Prostate gland (tissue), 2 donors: ENCODE measurements at regions of chr17 and their contacts with region 1.

Region 1: DNA sequence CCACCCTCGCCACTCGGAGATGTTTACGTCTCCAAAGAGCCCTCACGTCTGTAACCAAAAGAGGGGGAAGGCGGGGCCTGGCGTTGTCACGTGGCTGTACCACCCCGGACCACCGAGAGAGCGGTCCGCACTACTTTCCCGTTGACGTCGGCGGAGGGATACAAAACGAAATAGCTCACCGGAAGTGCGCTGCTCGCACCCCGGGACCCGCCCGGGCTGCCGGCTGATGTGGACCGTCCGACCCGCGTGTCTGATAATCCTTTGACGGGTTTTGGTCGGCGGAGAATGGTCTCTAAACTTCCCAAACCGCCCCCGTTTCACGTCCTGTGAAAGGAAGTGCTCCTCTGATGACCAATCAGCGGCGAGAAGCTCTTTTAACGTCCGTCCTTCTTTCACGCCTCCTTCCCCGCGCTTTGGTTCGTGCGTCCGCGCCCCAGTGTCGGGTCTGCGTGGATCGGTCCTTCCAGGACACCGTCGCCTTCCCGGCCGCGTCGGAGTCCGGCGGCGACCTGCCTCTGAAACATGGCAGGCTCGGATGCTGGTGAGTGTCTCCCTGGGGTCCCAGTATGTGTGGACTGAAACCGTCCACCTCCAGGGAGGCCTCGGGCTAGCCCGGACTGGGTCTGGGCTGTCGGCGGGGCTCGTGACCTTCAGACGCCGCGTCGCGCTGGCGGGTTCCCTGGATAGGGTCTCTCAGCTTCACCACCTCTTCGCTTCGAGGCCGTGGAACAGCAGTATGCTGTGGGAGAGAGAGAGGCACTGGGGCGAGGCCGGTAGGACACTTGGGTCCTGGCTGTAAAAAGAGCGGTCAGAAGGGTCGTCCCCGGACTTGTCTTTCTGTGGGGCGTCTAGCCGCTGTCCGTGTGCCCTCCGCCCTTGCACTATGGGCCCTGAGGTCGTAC is at the start of gene CEP95:
- DNase-seq: peak; percentile 91
- H3K4me3 ChIP-seq: peak within 1 kb of the TSS; percentile 94 to 98
- H3K27ac ChIP-seq: peak within 1 kb of the TSS; percentile 99
- H3K4me1 ChIP-seq: peaks cover 7% of the 10 kb centered on the region
- H3K27me3 ChIP-seq: no peaks in the 10 kb centered on the region
- CTCF ChIP-seq: peak in 1 of 4 experiments; percentile 18
- POLR2A ChIP-seq: peak; percentile 81
- total RNA-seq, gene CEP95: 26.8 to 50.6 TPM

Region 2: GRCh38 chr17:64320613-64321553 is 185.9 kb before region 1 on chr17:
- intact Hi-C with region 1: loop called (anchors 10 kb)
- DNase-seq: peak; percentile 41
- H3K4me3 ChIP-seq: no peak overlapping the region
- H3K27ac ChIP-seq: no peak overlapping the region
- H3K4me1 ChIP-seq: no peaks in the 10 kb centered on the region
- H3K27me3 ChIP-seq: no peaks in the 10 kb centered on the region
- CTCF ChIP-seq: peak; percentile 59 to 71 (median 68)
- POLR2A ChIP-seq: no peak

Region 3: DNA sequence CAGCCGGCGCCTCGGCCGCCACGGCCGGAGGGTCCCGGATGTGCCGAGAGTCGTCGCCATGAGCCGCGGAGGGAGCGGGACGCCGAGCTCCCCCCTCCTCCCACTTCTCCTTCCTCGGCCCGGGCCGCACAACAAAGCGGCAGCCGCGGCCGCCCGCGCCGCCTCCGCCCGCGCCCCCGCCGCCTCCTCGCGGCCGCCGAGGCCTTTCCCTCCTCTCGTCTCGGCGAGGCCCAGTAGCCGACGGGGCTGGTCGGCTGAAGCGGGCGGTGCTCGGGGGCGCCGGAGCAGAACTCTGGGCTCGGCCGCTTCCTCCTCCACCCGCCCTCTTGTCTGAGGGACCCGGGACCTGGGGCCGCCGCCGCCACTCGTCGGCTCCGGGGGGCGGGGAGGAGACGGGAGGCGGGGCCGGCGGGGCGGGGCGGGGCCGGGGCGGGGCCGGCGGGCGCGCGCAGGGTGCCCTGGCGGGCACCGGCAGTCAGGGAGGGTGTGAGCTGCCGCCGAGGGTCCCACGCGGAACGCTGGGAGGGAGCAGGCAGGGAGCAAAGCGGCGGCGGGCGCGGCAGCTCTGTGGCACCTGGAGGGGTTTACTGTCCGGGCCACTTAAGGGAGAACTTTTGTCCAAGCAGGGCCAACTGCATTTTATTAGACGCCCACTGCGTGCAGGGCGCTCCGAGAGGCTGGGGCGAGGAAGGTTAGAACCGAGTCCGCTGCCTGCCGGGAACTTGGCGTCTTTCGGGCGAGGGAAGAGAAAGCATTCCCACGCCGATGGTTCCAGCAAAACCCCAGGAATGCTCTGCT is 155.3 kb after region 1 on chr17 and contains the start of gene SMURF2:
- intact Hi-C with region 1: loop called (anchors 5 kb)
- DNase-seq: peak; percentile 85
- H3K4me3 ChIP-seq: peak within 1 kb of the TSS; percentile 76 to 92
- H3K27ac ChIP-seq: peak within 1 kb of the TSS; percentile 91 to 97
- H3K4me1 ChIP-seq: no peaks in the 10 kb centered on the region
- H3K27me3 ChIP-seq: no peaks in the 10 kb centered on the region
- CTCF ChIP-seq: peak in 1 of 4 experiments; percentile 9
- POLR2A ChIP-seq: peak; percentile 94
- total RNA-seq, gene SMURF2: 21.5 to 29.1 TPM